Posterior vena cava (tissue), 2 donors: ENCODE measurements at regions of chr4 and their contacts with region 1.

Region 1: DNA sequence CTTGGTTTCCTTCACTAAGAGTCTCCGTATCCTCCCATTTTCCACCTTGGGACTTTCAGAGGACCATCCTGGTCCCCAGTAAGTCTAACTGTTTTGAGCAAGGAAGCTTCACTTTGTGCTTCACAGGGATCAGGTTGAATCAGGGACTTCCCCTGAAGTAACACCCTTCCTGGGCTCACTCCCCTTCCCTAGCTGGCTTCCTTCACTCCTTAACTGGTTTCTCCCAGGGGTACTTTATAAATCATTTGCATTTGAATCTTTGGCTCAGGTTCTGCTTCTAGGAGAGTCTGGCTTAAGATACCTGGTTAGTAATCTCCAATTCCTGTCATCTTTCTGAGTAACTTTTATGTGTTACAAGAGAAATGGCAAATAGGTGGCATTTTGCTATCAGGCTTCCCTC is 24.5 kb upstream of the GRIA2 start:
- DNase-seq: no peak

Region 2: GRCh38 chr4:156330436-156331031 is 865.5 kb before region 1 on chr4:
- intact Hi-C with region 1: no loop called
- DNase-seq: no peak

Region 3: DNA sequence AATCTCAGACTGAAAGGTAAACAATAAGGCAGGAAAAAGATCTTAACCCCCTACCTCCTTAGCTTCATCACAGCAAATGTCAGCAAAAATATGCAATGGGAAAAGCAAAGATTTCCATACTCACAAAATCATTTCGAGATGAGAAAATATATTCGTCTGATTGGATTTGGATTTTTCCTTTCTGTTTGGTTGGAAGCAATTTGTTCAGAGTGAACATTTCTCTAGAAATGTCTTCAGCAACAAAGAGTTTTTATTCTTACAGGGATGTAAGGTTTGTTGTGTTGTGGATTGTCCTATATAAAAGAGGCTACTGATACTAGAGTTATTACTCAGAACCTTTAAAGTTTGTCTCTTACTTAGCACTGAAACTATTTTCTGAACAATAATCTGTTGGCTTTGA is 48.3 kb after region 1 on chr4:
- intact Hi-C with region 1: loop called in 1 of 2 experiments (anchors 2 kb)
- DNase-seq: no peak